A673 (cell line): ENCODE measurements at regions of chr2 and their contacts with region 1.

Region 1: DNA sequence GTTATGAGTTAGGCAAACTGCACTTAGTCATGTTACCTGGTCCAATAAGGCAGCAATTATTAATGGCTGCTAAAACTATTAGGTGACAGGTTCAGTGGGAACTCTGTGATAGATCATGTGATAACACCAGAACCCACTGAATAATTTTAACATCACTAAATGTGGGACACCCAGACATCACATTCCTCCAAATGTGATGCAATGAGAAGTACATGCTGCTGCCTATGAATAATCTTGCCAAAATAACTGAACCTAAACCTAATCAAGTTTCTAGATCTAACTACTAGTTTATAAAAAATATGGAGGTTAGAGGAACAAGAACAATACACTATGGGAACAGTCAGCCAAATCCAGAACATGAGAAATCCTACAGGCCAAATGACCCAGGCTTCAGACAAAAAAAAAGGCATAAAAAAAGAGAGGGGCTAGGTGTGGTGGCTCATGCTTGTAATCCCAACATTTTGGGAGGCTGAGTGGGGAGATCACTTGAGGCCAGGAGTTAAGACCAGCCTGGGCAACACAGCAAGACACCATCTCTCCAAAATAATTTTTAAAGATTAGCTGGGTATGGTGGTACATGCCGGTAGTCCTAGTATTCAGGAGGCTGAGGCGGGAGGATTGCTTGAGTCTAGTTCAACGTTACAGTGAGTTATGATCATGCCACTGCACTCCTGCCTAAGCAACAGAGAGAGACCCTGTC is 7.0 kb upstream of the ACTR2 start:
- DNase-seq: no peak
- H3K4me3 ChIP-seq: no peak overlapping the region
- H3K27ac ChIP-seq: no peak overlapping the region
- H3K4me1 ChIP-seq: no peaks in the 10 kb centered on the region
- H3K27me3 ChIP-seq: no peaks in the 10 kb centered on the region
- CTCF ChIP-seq: no peak

Region 2: GRCh38 chr2:65129826-65130663 is 90.5 kb before region 1 on chr2 and contains the start of gene RAB1A:
- CTCF ChIA-PET with region 1: no interaction called
- POLR2A ChIA-PET with region 1: no interaction called
- intact Hi-C with region 1: no loop called
- DNase-seq: peak; percentile 100
- H3K4me3 ChIP-seq: peak within 1 kb of the TSS; percentile 100
- H3K27ac ChIP-seq: peak within 1 kb of the TSS; percentile 98
- H3K4me1 ChIP-seq: peaks cover 23% of the 10 kb centered on the region
- H3K27me3 ChIP-seq: no peaks in the 10 kb centered on the region
- CTCF ChIP-seq: peak; percentile 51
- total RNA-seq, gene RAB1A: 119 and 122 TPM in 2 replicates

Region 3: DNA sequence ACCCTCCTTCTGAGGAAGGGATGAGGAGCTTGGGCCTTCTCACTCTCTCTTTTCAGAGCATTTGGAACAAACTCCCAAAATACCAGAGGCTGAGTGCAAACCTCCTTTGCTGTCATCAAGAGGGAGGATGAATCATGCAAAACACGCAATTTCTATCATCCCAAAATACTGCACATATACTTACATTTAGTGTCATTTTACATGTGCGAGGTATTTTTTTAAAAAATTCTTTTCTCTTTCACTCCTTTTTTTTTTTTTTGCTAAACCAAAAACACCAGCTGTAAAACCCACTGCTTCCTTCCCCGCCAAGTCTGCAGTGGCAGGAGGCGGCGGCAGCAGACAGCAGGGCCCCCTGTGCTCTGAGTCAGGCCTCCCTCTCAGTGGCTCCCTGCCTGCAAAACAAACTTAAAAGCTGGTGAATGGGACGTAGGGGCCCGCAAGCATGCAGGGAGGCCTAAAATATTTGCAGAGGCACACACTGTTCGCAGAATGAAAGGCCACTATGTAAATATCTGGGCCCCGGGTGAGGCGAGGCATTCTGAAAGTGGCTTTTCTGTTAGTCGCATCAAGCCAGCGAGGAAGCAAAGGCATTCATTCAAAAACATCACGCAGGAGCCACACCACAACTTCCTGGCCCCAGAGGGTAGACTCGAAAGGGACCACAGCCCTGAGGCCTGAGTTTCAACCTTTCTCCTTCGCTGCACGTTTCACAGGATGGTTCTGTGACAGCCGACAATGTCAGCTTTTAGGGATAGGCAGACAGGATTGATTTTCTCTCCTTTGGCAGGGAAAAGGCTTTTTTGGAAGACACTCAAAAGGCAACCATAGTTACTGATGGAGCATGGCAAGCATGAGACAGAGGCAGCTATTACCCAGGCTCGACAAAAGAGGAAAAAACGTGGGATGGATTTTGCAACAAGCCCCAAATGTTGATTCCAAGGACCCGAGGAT is 80.5 kb after region 1 on chr2:
- CTCF ChIA-PET with region 1: no interaction called
- POLR2A ChIA-PET with region 1: no interaction called
- intact Hi-C with region 1: no loop called
- DNase-seq: peak; percentile 61
- H3K4me3 ChIP-seq: no peak overlapping the region
- H3K27ac ChIP-seq: peak overlapping the region; percentile 54
- H3K4me1 ChIP-seq: peaks cover 16% of the 10 kb centered on the region
- H3K27me3 ChIP-seq: no peaks in the 10 kb centered on the region
- CTCF ChIP-seq: no peak

Region 4: GRCh38 chr2:65358678-65359400 is 138.3 kb after region 1 on chr2:
- CTCF ChIA-PET with region 1: no interaction called
- POLR2A ChIA-PET with region 1: interaction called, 13 read pairs
- intact Hi-C with region 1: no loop called
- DNase-seq: no peak
- H3K4me3 ChIP-seq: no peak overlapping the region
- H3K27ac ChIP-seq: no peak overlapping the region
- H3K4me1 ChIP-seq: peaks cover 41% of the 10 kb centered on the region
- H3K27me3 ChIP-seq: no peaks in the 10 kb centered on the region
- CTCF ChIP-seq: no peak